Activated naive CD4-positive, alpha-beta T cell treated with anti-CD3 and anti-CD28 coated beads for 36 hours (primary cell): ENCODE measurements at regions of chr3 and their contacts with region 1.

Region 1: GRCh38 chr3:31918179-31919168 is 62.6 kb downstream of the OSBPL10 start:
- DNase-seq: no peak
- H3K4me3 Mint-ChIP-seq: no peak overlapping the region
- H3K27ac Mint-ChIP-seq: peak overlapping the region; percentile 62
- H3K4me1 Mint-ChIP-seq: peaks cover 22% of the 10 kb centered on the region
- H3K27me3 Mint-ChIP-seq: no peaks in the 10 kb centered on the region

Region 2: GRCh38 chr3:31550452-31551251 is 367.8 kb before region 1 on chr3:
- CTCF ChIA-PET with region 1: no interaction called
- intact Hi-C with region 1: loop called (anchors 10 kb)
- DNase-seq: peak; percentile 32
- H3K4me3 Mint-ChIP-seq: no peak overlapping the region
- H3K27ac Mint-ChIP-seq: peak overlapping the region; percentile 48
- H3K4me1 Mint-ChIP-seq: peaks cover 77% of the 10 kb centered on the region
- H3K27me3 Mint-ChIP-seq: no peaks in the 10 kb centered on the region

Region 3: GRCh38 chr3:31831598-31831997 is 86.9 kb before region 1 on chr3:
- CTCF ChIA-PET with region 1: no interaction called
- intact Hi-C with region 1: no loop called
- DNase-seq: no peak
- H3K4me3 Mint-ChIP-seq: no peak overlapping the region
- H3K27ac Mint-ChIP-seq: no peak overlapping the region
- H3K4me1 Mint-ChIP-seq: no peaks in the 10 kb centered on the region
- H3K27me3 Mint-ChIP-seq: peaks cover 2% of the 10 kb centered on the region

Region 4: GRCh38 chr3:31892916-31893573 is 25.4 kb before region 1 on chr3:
- CTCF ChIA-PET with region 1: no interaction called
- intact Hi-C with region 1: no loop called
- DNase-seq: no peak
- H3K4me3 Mint-ChIP-seq: no peak overlapping the region
- H3K27ac Mint-ChIP-seq: no peak overlapping the region
- H3K4me1 Mint-ChIP-seq: no peaks in the 10 kb centered on the region
- H3K27me3 Mint-ChIP-seq: peaks cover 11% of the 10 kb centered on the region